Ovary (tissue), 10 donors: ENCODE measurements at regions of chr5 and their contacts with region 1.

Region 1: GRCh38 chr5:1479581-1480188 is 34.4 kb upstream of the SLC6A3 start:
- DNase-seq: peak in 4 of 5 donors; percentile 41 to 64 (median 56)
- H3K4me3 ChIP-seq: no peak overlapping the region
- H3K27ac ChIP-seq: no peak overlapping the region
- H3K4me1 ChIP-seq: no peaks in the 10 kb centered on the region
- H3K27me3 ChIP-seq: no peaks in the 10 kb centered on the region
- CTCF ChIP-seq: peak; percentile 25 to 42 (median 41)
- EP300 ChIP-seq: no peak
- POLR2A ChIP-seq: no peak

Region 2: DNA sequence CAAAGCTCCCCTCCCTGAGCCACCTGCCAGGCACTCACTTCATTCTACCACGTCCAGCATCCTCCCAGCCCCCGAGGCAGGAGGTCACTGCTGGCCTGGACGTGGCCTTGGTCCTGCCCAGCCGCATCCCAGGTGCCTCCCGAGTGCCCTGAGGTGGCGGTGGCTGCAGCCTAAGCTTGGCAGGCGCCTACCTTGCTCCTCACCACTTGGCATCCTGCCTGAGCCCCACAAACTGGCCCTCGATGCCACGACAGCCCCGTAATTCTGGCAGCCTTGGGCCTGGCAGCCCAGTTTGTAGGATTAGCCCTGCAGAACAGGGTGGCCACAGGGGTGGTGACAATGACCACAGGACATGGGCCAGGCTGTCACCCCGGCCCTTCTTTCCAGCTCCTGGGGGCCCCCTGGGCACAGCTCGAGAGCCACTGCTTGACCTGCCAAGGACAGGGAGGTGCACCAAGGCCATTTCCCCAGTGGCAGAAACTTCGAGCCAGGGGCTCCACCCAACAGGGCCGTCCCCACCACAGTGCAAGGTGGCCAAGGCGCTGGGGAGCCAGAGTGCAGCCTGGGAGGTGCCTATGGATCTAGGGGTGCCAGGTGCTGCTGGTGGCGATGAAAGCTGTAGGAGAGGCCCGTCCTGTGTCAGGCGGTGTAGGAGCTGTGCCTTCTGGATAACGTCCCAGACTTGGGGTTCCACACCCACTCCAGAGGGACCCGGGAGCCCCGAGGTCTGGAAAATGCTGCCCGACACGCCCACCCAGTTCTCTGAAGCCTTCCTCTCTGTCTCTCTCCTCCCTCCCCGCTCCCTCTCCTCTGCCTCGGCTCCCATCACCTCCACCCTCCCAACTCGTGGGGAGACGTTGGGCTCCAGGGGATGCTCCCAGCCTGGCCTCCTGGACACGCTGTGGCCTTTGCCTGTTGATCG is 452.7 kb before region 1 on chr5:
- intact Hi-C with region 1: no loop called
- DNase-seq: peak in 1 of 5 donors; percentile 10
- H3K4me3 ChIP-seq: no peak overlapping the region
- H3K27ac ChIP-seq: no peak overlapping the region
- H3K4me1 ChIP-seq: no peaks in the 10 kb centered on the region
- H3K27me3 ChIP-seq: no peaks in the 10 kb centered on the region
- CTCF ChIP-seq: no peak
- EP300 ChIP-seq: no peak
- POLR2A ChIP-seq: no peak

Region 3: DNA sequence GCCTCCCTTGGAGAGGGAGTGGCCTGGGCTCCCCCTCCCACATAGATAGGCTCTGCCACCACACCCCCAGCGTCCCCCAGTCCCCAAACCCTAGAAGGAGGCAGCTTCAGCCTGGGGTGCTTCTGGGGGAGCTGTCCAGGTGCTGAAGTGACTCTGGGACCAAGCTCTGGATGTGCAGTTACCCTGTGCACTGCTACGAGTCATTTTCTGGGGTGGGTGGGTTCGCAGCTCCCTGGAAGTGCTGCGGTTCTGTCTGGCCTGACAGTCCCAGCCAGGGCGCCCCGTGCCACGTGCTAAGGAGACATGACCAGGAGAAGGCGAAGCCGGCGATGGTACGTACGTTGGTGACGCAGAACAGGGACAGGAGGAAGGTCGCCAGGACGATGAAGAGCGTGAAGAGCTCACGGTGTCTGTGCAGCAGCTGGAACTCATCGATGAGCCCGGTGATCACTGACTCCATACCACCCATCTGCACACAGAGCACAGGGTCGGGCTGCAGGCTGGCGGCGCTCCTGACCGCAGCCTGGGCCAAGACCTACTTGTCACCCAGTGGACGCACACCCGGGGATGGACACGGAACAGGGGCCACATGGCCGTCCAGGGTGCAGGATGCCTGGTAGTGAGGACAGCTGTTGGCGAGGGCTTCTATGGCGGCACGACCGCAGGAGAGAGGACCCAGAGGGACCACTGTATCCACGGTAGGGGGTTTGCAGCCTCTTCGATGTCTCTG is 70.1 kb before region 1 on chr5:
- intact Hi-C with region 1: loop called in 1 of 4 experiments (anchors 1 kb)
- DNase-seq: peak in 1 of 5 donors; percentile 13
- H3K4me3 ChIP-seq: no peak overlapping the region
- H3K27ac ChIP-seq: no peak overlapping the region
- H3K4me1 ChIP-seq: no peaks in the 10 kb centered on the region
- H3K27me3 ChIP-seq: no peaks in the 10 kb centered on the region
- CTCF ChIP-seq: no peak
- EP300 ChIP-seq: no peak
- POLR2A ChIP-seq: no peak